Activated B cell treated with CpG ODN at 0.5 μM for 24 hours (primary cell): ENCODE measurements at regions of chr19 and their contacts with region 1.

Region 1: GRCh38 chr19:15393963-15394362 is 14.4 kb upstream of the AKAP8 start:
- DNase-seq: no peak
- ATAC-seq: no peak
- H3K4me3 Mint-ChIP-seq: no peak overlapping the region
- H3K27ac Mint-ChIP-seq: no peak overlapping the region
- H3K4me1 Mint-ChIP-seq: peaks cover 10% of the 10 kb centered on the region
- H3K27me3 Mint-ChIP-seq: no peaks in the 10 kb centered on the region
- CTCF ChIP-seq: no peak

Region 2: GRCh38 chr19:15365264-15365663 is 28.7 kb before region 1 on chr19:
- CTCF ChIA-PET with region 1: no interaction called
- POLR2A ChIA-PET with region 1: interaction called, 10 read pairs
- intact Hi-C with region 1: no loop called
- DNase-seq: no peak
- ATAC-seq: no peak
- H3K4me3 Mint-ChIP-seq: no peak overlapping the region
- H3K27ac Mint-ChIP-seq: no peak overlapping the region
- H3K4me1 Mint-ChIP-seq: no peaks in the 10 kb centered on the region
- H3K27me3 Mint-ChIP-seq: no peaks in the 10 kb centered on the region
- CTCF ChIP-seq: no peak